ENCODE measurements at regions of chr15 and their contacts with region 1.

Region 1: DNA sequence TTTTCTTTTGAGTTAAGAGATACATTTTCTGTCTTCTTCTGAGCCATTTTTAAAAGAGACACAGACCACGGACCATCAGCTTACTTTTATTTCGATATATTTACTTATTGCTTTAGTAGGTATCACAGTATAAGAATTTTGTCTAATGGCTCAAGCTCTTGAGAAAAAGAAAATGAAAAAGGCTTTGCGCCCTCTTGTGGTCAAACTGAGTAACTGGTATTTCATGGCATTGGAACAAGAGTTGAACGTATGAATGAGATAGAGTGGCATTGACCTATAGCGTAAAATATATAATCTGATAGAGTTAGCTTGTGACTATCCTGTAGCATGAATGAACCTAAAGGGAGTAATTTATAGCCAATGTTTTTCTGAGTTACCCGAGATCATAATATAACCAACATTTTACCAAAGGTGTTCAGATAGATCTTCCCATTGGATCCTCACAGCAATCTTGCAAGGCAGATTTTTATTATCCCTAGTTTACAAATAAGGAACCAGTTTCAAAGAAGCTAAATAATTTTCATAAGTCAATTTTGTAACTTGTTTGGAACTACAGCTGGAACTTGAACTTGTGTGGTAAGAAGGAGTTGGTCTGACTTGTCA is 154.6 kb downstream of the POLR2M start:
- DNase-seq: peak; percentile 33
- ATAC-seq: no peak
- H3K4me3 Mint-ChIP-seq: no peak overlapping the region
- H3K27ac Mint-ChIP-seq: no peak overlapping the region
- H3K4me1 Mint-ChIP-seq: no peaks in the 10 kb centered on the region
- H3K27me3 Mint-ChIP-seq: peaks cover 13% of the 10 kb centered on the region
- CTCF ChIP-seq: peak; percentile 80

Region 2: DNA sequence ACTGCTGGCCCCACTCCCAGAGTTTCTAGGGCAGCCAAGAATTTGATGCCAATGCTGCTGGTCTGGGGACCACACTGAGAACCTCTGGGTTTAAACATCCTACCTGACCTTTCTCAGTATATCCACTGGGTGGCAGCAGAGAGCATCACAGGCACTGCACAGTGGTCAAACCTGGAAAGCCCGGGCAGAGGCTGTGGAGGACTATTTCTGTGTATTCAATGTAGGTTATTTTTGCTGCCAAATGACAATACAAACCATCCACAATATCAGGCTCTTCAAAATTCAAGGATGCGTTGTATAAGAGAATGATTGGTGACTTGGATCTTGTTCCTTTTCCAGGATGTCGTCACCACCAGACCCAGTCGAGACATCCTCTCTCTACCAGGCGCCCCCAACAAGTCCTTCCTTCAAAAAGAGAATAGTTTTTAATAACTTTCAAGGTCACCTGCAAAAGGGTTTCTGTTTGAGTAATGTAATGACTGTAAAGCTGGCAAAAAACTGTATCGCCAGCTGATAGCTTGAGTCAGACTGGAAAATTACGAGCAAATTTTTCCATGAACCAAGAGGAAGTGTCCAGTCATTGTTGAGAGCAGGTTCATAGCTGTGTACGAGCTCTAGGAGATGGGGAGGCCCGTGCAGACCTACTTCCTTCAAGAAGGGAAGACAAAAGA is 300.0 kb before region 1 on chr15:
- CTCF ChIA-PET with region 1: interaction called, 28 read pairs
- POLR2A ChIA-PET with region 1: no interaction called
- intact Hi-C with region 1: loop called (anchors 2 kb)
- DNase-seq: peak; percentile 71
- ATAC-seq: peak; percentile 82
- H3K4me3 Mint-ChIP-seq: no peak overlapping the region
- H3K27ac Mint-ChIP-seq: peak overlapping the region; percentile 71
- H3K4me1 Mint-ChIP-seq: peaks cover 38% of the 10 kb centered on the region
- H3K27me3 Mint-ChIP-seq: peaks cover 21% of the 10 kb centered on the region
- CTCF ChIP-seq: peak; percentile 89

Region 3: DNA sequence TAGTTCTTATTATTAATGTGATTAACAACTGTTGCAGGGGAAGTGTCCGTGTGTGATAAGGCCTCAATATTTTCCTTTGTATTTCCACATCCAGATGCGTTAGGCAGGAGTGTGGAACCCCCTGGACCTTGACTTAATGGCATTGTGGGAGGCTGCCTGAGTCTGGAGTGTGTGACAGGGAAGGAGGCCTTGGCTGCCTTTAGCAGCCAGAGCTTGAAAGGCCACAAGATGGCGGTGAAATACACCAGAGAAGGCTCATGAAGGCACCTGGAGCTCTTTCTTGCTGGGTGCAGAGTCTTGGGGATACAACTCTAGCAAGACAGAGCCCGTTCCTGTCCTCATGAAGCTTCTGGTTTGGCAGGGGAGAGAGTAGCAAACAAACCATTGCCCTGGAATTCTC is 117.7 kb before region 1 on chr15:
- CTCF ChIA-PET with region 1: interaction called, 17 read pairs
- POLR2A ChIA-PET with region 1: no interaction called
- intact Hi-C with region 1: no loop called
- DNase-seq: no peak
- ATAC-seq: no peak
- H3K4me3 Mint-ChIP-seq: no peak overlapping the region
- H3K27ac Mint-ChIP-seq: no peak overlapping the region
- H3K4me1 Mint-ChIP-seq: no peaks in the 10 kb centered on the region
- H3K27me3 Mint-ChIP-seq: no peaks in the 10 kb centered on the region
- CTCF ChIP-seq: no peak

Region 4: GRCh38 chr15:57777003-57777402 is 84.1 kb before region 1 on chr15:
- CTCF ChIA-PET with region 1: interaction called, 12 read pairs
- POLR2A ChIA-PET with region 1: no interaction called
- intact Hi-C with region 1: no loop called
- DNase-seq: no peak
- ATAC-seq: no peak
- H3K4me3 Mint-ChIP-seq: no peak overlapping the region
- H3K27ac Mint-ChIP-seq: peak overlapping the region; percentile 26
- H3K4me1 Mint-ChIP-seq: peaks cover 15% of the 10 kb centered on the region
- H3K27me3 Mint-ChIP-seq: no peaks in the 10 kb centered on the region
- CTCF ChIP-seq: no peak

Region 5: DNA sequence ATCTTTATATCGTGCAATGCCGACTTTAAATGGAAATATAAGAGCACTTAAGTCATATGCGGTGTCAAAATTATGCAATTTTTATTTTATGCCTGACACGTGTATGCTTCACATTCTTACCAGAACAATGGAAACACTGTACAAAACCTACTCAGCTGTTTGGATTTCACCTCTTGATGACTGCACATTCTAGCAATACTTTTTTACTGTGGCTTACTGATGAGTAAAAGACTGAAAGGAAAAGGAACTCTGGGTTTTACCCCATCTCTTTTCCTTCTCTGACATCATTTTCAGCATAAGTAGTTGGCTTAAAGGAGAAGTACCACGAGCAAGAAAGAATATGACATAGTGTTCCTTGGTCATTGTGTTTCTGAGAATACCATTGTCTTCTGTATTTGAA is 11.8 kb before region 1 on chr15:
- CTCF ChIA-PET with region 1: interaction called, 39 read pairs
- POLR2A ChIA-PET with region 1: no interaction called
- intact Hi-C with region 1: no loop called
- DNase-seq: no peak
- ATAC-seq: no peak
- H3K4me3 Mint-ChIP-seq: no peak overlapping the region
- H3K27ac Mint-ChIP-seq: no peak overlapping the region
- H3K4me1 Mint-ChIP-seq: no peaks in the 10 kb centered on the region
- H3K27me3 Mint-ChIP-seq: peaks cover 17% of the 10 kb centered on the region
- CTCF ChIP-seq: no peak

Region 6: DNA sequence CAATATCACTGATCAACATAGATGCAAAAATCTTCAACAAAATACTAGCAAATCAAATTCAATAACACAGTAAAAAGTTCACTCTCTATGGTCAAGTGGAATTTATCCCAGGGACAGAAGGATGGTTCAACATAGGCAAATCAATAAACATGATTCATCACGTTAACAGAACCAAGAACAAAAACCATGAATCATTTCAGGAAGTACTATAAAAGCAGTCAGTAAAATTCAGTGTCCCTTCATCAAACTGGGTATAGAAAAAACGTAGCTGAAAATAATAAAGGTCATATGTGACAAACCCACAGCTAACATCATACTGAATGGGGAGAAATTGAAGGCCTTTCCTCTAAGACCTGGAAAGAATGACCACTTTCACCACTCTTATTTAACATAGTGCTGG is 17.4 kb after region 1 on chr15:
- CTCF ChIA-PET with region 1: interaction called, 27 read pairs
- POLR2A ChIA-PET with region 1: no interaction called
- intact Hi-C with region 1: no loop called
- DNase-seq: no peak
- ATAC-seq: no peak
- H3K4me3 Mint-ChIP-seq: no peak overlapping the region
- H3K27ac Mint-ChIP-seq: no peak overlapping the region
- H3K4me1 Mint-ChIP-seq: no peaks in the 10 kb centered on the region
- H3K27me3 Mint-ChIP-seq: peaks cover 9% of the 10 kb centered on the region
- CTCF ChIP-seq: no peak

Measured in activated CD8-positive, alpha-beta T cell treated with anti-CD3 and anti-CD28 coated beads for 36 hours (primary cell).